Activated naive CD4-positive, alpha-beta T cell treated with anti-CD3 and anti-CD28 coated beads for 36 hours (primary cell): ENCODE measurements at regions of chr1 and their contacts with region 1.

Region 1: DNA sequence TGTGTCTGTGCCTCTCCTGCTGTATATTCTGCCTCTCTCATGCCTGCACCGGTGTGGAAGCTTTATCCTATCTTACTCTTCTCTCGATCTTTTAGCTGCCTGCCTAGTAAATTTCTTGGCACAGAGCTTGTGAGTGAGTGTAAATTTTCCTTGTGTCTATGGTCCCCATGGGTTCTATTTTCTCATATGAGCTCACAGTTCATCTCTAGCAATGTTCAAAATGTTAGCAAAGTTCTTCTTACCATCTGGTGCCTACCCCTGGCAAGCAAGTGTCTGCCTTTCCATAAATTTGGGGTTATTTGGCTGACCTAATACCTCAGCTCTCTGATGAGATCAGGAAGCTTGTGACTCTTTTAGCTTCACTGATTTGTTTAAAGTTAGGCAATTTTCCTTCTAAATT is 572.1 kb upstream of the BRINP3 start:
- DNase-seq: no peak
- H3K4me3 Mint-ChIP-seq: no peak overlapping the region
- H3K27ac Mint-ChIP-seq: no peak overlapping the region
- H3K4me1 Mint-ChIP-seq: no peaks in the 10 kb centered on the region
- H3K27me3 Mint-ChIP-seq: no peaks in the 10 kb centered on the region

Region 2: GRCh38 chr1:190837888-190838287 is 211.9 kb before region 1 on chr1:
- CTCF ChIA-PET with region 1: no interaction called
- intact Hi-C with region 1: loop called (anchors 5 kb)
- DNase-seq: no peak
- H3K4me3 Mint-ChIP-seq: no peak overlapping the region
- H3K27ac Mint-ChIP-seq: no peak overlapping the region
- H3K4me1 Mint-ChIP-seq: no peaks in the 10 kb centered on the region
- H3K27me3 Mint-ChIP-seq: no peaks in the 10 kb centered on the region

Region 3: DNA sequence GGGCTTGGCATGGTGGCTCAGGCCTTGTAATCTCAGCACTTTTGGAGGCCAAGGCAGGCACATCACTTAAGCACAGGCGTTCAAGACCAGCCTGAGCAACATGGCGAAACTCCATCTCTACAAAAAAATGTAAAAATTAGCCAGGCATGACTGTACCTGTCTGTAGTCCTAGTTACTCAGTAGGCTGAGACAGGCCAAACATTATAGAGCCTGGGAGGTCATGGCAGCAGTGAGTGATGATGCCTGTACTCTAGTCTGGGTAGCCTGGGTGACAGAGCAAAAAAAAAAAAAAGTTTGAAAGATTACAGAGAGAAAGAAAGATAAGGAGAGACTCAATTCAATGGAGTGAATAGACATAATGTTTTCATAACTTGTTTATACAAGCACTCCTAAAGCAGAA is 15.6 kb before region 1 on chr1:
- CTCF ChIA-PET with region 1: no interaction called
- intact Hi-C with region 1: no loop called
- DNase-seq: no peak
- H3K4me3 Mint-ChIP-seq: no peak overlapping the region
- H3K27ac Mint-ChIP-seq: no peak overlapping the region
- H3K4me1 Mint-ChIP-seq: no peaks in the 10 kb centered on the region
- H3K27me3 Mint-ChIP-seq: no peaks in the 10 kb centered on the region